ENCODE measurements at regions of chr2 and their contacts with region 1.

Region 1: DNA sequence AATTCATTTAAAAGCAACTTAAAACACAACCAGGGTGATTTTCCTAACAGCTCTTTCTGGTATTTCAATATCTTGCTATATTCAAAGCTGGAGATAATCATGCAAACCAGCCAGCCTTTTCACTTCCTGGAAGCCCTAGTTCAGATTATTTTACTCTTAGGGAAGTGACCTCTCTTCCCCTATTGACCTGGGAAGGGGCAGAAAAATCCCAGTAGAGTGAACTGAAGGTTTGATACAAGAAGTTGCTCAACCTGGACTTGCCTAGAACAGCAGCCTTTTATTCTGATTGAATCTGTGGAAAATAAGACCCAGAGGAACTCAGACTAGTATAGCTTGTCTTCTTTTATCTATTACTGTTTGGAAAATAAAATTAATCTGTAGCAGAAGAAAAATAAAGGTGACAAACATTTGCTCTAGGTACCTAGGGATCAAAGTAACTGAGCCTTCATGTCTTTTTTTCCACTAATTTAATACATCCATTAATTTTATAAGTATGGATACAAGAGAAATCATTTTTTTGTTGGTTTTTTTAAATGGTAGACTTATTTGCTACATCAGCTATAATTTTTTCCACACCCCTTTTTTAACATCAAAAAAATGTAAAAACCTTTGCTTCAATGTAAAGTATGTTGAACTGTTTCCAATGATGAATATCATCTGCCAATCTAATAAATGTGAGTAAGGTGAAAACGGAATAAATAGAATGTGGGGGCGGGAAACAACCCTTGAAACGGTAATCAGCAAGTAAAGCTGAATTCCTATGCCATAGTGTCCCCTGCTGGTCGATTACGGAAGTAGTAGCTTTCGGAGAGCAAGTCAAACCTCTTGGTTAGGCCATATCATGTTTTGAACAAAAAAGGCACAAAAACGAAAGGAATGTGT is 629.9 kb downstream of the NRXN1 start:
- DNase-seq: peak; percentile 8
- H3K4me3 ChIP-seq: no peak overlapping the region
- H3K27ac ChIP-seq: no peak overlapping the region
- H3K27me3 ChIP-seq: no peaks in the 10 kb centered on the region
- CTCF ChIP-seq: peak; percentile 91

Region 2: DNA sequence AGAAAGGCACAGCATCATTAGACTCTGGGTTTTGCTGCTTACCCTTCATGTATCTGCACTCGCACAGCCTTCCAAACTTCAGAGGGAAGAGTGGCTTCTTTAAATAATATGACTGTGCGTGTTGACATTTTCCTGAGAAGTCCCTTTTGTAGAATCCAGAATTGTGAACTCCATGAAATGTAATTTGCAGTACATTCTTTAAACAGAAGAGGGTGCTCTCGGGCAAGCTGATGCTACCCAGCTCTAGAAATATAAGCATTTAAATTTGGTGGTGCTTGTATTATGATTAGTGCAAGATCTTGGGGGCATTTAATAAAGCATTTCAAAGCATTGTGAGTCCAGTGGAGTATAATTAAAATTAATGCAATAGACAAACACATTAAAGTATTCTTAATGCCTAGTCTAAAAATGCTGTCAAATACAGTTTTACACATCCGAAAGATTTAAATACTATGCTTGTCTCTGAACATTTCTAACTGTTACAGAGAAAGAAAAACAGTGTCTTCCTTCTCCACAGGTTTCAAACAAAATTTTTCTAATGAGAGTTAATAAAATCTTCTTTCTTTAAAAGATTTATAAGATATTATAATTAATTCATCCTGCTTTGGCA is 1801.7 kb before region 1 on chr2:
- CTCF ChIA-PET with region 1: interaction called, 16 read pairs
- POLR2A ChIA-PET with region 1: no interaction called
- DNase-seq: peak; percentile 30
- H3K4me3 ChIP-seq: no peak overlapping the region
- H3K27ac ChIP-seq: no peak overlapping the region
- H3K27me3 ChIP-seq: no peaks in the 10 kb centered on the region
- CTCF ChIP-seq: peak; percentile 87

Region 3: GRCh38 chr2:48946449-48947048 is 1455.5 kb before region 1 on chr2:
- CTCF ChIA-PET with region 1: interaction called, 25 read pairs
- POLR2A ChIA-PET with region 1: no interaction called
- DNase-seq: peak; percentile 21
- H3K4me3 ChIP-seq: no peak overlapping the region
- H3K27ac ChIP-seq: no peak overlapping the region
- H3K27me3 ChIP-seq: no peaks in the 10 kb centered on the region
- CTCF ChIP-seq: peak; percentile 81

Region 4: GRCh38 chr2:49255409-49255971 is 1146.5 kb before region 1 on chr2:
- CTCF ChIA-PET with region 1: interaction called, 10 read pairs
- POLR2A ChIA-PET with region 1: no interaction called
- DNase-seq: no peak
- H3K4me3 ChIP-seq: no peak overlapping the region
- H3K27ac ChIP-seq: no peak overlapping the region
- H3K27me3 ChIP-seq: peaks cover 4% of the 10 kb centered on the region
- CTCF ChIP-seq: peak; percentile 19

Region 5: GRCh38 chr2:50388324-50388723 is 13.7 kb before region 1 on chr2:
- CTCF ChIA-PET with region 1: interaction called, 10 read pairs
- POLR2A ChIA-PET with region 1: no interaction called
- DNase-seq: no peak
- H3K4me3 ChIP-seq: no peak overlapping the region
- H3K27ac ChIP-seq: no peak overlapping the region
- H3K27me3 ChIP-seq: no peaks in the 10 kb centered on the region
- CTCF ChIP-seq: no peak

Region 6: GRCh38 chr2:50419778-50420177 is 17.8 kb after region 1 on chr2:
- CTCF ChIA-PET with region 1: interaction called, 10 read pairs
- POLR2A ChIA-PET with region 1: no interaction called
- DNase-seq: no peak
- H3K4me3 ChIP-seq: no peak overlapping the region
- H3K27ac ChIP-seq: no peak overlapping the region
- H3K27me3 ChIP-seq: no peaks in the 10 kb centered on the region
- CTCF ChIP-seq: no peak